ENCODE measurements at regions of chr11 and their contacts with region 1.

Region 1: GRCh38 chr11:112289588-112290492 is 29.2 kb upstream of the PLET1 start:
- DNase-seq: peak; percentile 74
- H3K4me3 ChIP-seq: peak overlapping the region; percentile 38
- H3K27ac ChIP-seq: peak overlapping the region; percentile 39 to 63
- H3K4me1 ChIP-seq: no peaks in the 10 kb centered on the region
- H3K27me3 ChIP-seq: no peaks in the 10 kb centered on the region
- CTCF ChIP-seq: peak; percentile 80 to 92 (median 90)
- POLR2A ChIP-seq: no peak

Region 2: GRCh38 chr11:112555491-112556364 is 265.9 kb after region 1 on chr11:
- intact Hi-C with region 1: loop called (anchors 5 kb)
- DNase-seq: no peak
- H3K4me3 ChIP-seq: no peak overlapping the region
- H3K27ac ChIP-seq: no peak overlapping the region
- H3K4me1 ChIP-seq: no peaks in the 10 kb centered on the region
- H3K27me3 ChIP-seq: no peaks in the 10 kb centered on the region
- CTCF ChIP-seq: peak in 2 of 4 experiments; percentile 7 to 46
- POLR2A ChIP-seq: no peak

Region 3: DNA sequence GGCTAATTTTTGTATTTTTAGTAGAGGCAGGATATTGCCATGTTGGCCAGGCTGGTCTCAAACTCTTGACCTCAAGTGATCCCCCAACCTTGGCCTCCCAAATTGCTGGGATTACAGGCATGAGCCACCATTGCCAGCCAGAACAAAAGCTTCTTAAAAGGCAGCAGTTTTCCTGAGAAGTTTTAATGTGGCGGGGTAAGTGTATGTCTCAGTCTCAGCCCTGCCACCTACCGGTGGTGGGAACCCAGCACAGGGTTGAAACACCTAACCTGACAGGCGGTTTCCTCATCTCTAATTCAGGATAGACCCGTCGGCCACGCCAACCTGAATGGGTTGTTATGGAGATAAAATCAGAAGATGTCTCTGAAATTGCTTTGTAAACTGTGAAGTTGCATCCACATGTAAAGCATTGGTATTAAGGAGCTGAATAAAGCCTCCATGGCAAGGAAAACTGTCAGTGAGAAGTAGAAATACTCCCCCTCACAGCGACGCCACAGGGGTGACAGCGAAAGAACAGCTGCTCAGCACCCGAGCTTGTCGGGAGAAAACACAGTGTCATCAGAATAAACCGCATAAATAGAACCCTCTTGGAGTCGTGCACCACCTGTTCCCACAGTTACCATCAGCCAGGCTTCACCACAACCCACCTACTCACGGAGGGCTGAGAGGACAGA is 505.4 kb after region 1 on chr11:
- intact Hi-C with region 1: loop called (anchors 5 kb)
- DNase-seq: no peak
- H3K4me3 ChIP-seq: no peak overlapping the region
- H3K27ac ChIP-seq: no peak overlapping the region
- H3K4me1 ChIP-seq: no peaks in the 10 kb centered on the region
- H3K27me3 ChIP-seq: no peaks in the 10 kb centered on the region
- CTCF ChIP-seq: peak in 3 of 4 experiments; percentile 28 to 50 (median 36)
- POLR2A ChIP-seq: no peak

Region 4: DNA sequence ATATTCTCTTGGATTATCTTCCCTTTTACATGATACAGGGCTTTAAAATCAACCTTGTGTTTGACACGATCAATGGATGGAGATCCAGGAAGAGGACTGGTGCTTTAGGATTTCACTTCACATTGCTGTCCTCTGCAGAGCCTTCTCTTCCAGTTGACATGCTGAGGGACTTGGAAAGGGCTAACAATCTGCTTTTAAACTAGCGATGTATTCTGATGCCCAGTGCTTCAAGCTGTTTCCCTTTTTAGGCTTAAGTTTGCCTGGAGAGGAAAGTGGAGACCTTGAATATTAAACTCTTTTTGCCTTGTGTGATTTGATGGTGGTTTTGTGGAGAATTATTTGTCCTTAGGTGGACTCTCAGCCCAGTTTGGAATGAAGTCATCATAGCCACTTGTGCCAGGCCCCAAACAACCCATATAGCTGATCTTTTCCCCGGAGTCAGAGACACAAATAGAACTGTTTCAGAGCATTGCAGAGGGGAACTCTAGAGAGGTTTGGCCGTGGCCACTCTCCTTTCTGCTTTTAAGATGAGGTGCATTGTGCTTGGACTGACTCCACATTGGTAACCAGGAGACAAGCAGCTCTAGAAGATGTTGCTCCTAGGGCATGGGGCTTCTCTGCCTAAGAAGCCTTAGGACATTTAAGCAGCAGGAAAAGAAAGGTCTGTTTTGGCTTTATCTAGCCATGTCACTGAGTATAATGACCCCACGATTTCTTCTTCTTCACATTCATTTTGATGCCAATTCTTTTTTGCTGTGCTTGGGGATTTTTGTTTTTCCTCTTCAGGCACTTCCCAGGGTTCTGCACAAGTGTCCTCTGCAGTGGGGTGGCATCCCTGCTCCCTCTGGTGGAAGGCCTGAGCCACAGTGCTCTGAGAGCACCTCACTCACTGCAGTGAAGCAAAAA is 824.2 kb after region 1 on chr11:
- intact Hi-C with region 1: loop called (anchors 10 kb)
- DNase-seq: peak; percentile 27
- H3K4me3 ChIP-seq: no peak overlapping the region
- H3K27ac ChIP-seq: no peak overlapping the region
- H3K4me1 ChIP-seq: no peaks in the 10 kb centered on the region
- H3K27me3 ChIP-seq: no peaks in the 10 kb centered on the region
- CTCF ChIP-seq: peak; percentile 29 to 80 (median 64)
- POLR2A ChIP-seq: no peak

Measured in prostate gland (tissue), 2 donors.